Gastrocnemius medialis (tissue), 4 donors: ENCODE measurements at regions of chr10 and their contacts with region 1.

Region 1: DNA sequence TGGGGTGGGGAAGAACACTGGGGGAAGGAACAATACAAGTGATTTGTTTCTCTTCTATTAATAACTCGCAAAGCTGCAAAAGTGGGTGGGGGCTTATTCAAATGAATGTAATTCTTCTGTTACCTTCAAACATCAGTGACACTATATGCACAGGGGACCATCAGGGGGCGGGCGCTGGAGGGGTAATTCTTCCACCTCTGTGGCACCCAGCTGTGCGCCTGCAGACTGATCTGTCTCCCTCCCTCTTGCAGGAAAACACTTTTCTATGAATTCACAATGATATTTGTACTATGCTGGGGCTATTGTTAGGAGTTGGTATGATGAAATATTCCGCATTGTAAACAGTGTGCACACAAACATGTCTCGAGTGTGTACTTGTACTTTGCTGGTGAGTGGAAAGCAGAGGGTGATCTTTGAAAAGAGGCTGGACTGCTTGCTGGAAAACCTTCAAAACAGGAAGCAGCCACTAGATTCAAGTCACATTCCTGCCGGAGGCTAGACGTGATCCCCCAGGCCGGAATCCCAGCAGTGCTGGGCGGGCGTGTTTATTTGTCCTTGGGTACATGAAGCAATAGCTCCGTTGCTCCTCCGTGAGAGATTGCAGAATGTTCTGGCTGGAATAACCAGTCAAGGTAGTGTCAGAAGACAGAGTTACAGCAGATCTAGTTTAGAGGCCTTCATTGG is 15.8 kb upstream of the BNIP3 start:
- DNase-seq: peak; percentile 92
- ATAC-seq: peak; percentile 96 to 97
- H3K4me3 ChIP-seq: peak overlapping the region; percentile 29 to 51 (median 36)
- H3K27ac ChIP-seq: peak overlapping the region; percentile 88 to 97 (median 92)
- H3K4me1 ChIP-seq: peaks cover 28 to 47% of the 10 kb centered on the region in 2 donors
- H3K27me3 ChIP-seq: no peaks in the 10 kb centered on the region
- CTCF ChIP-seq: peak in 1 of 5 experiments; percentile 16
- POLR2A ChIP-seq: peak; percentile 17 to 53

Region 2: GRCh38 chr10:131981429-131982184 is 15.9 kb before region 1 on chr10 and contains the start of gene BNIP3:
- in situ Hi-C with region 1: no loop called
- intact Hi-C with region 1: loop called (anchors 1 kb)
- DNase-seq: peak; percentile 94
- ATAC-seq: peak; percentile 74 to 84
- H3K4me3 ChIP-seq: peak within 1 kb of the TSS; percentile 81 to 99 (median 91)
- H3K27ac ChIP-seq: peak within 1 kb of the TSS; percentile 93 to 99 (median 95)
- H3K4me1 ChIP-seq: peaks cover 24 to 30% of the 10 kb centered on the region in 2 donors
- H3K27me3 ChIP-seq: no peaks in the 10 kb centered on the region
- CTCF ChIP-seq: peak in 2 of 5 experiments; percentile 2 to 21
- POLR2A ChIP-seq: peak; percentile 98 to 99
- total RNA-seq, gene BNIP3: 337 to 1,280 (median 583) TPM

Region 3: GRCh38 chr10:132163278-132163765 is 165.8 kb after region 1 on chr10:
- in situ Hi-C with region 1: no loop called
- intact Hi-C with region 1: no loop called
- DNase-seq: no peak
- ATAC-seq: no peak
- H3K4me3 ChIP-seq: no peak overlapping the region
- H3K27ac ChIP-seq: no peak overlapping the region
- H3K4me1 ChIP-seq: peaks cover 11 to 18% of the 10 kb centered on the region in 2 donors
- H3K27me3 ChIP-seq: no peaks in the 10 kb centered on the region
- CTCF ChIP-seq: peak in 1 of 5 experiments; percentile 21
- POLR2A ChIP-seq: no peak